ENCODE measurements at regions of chr12 and their contacts with region 1.

Region 1: GRCh38 chr12:100101000-100101399 is 41.7 kb downstream of the BLTP3B start:
- DNase-seq: no peak
- H3K4me3 ChIP-seq: no peak overlapping the region
- H3K27ac ChIP-seq: no peak overlapping the region
- H3K4me1 ChIP-seq: no peaks in the 10 kb centered on the region
- H3K27me3 ChIP-seq: no peaks in the 10 kb centered on the region
- CTCF ChIP-seq: no peak
- POLR2A ChIP-seq: no peak

Region 2: GRCh38 chr12:100058482-100059029 is 42.4 kb before region 1 on chr12:
- intact Hi-C with region 1: no loop called
- DNase-seq: no peak
- H3K4me3 ChIP-seq: no peak overlapping the region
- H3K27ac ChIP-seq: no peak overlapping the region
- H3K4me1 ChIP-seq: no peaks in the 10 kb centered on the region
- H3K27me3 ChIP-seq: no peaks in the 10 kb centered on the region
- CTCF ChIP-seq: no peak
- POLR2A ChIP-seq: no peak

Region 3: DNA sequence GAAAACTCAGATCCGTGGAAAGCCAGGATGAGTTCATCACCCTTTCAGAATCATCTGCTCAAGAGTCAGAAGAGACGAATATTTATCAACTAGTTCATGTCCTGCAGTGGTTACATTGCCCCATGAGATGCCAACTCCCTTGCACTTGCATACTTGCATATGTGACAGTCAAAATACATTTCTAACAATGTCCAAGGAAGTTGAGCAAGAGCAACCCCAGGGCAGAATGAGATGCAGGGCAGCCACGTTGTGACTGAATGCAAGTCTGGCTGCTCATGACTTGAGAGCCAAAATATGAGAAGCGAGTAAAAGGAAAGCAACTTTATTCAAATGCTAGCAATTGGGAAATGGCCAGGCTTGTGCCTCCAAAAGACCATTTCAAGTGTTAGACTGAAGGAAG is 1155.3 kb after region 1 on chr12:
- intact Hi-C with region 1: loop called (anchors 5 kb)
- DNase-seq: no peak
- H3K4me3 ChIP-seq: no peak overlapping the region
- H3K27ac ChIP-seq: no peak overlapping the region
- H3K4me1 ChIP-seq: no peaks in the 10 kb centered on the region
- H3K27me3 ChIP-seq: no peaks in the 10 kb centered on the region
- CTCF ChIP-seq: no peak
- POLR2A ChIP-seq: no peak

Measured in testis (tissue), 5 donors.